ENCODE measurements at regions of chr9 and their contacts with region 1.

Region 1: DNA sequence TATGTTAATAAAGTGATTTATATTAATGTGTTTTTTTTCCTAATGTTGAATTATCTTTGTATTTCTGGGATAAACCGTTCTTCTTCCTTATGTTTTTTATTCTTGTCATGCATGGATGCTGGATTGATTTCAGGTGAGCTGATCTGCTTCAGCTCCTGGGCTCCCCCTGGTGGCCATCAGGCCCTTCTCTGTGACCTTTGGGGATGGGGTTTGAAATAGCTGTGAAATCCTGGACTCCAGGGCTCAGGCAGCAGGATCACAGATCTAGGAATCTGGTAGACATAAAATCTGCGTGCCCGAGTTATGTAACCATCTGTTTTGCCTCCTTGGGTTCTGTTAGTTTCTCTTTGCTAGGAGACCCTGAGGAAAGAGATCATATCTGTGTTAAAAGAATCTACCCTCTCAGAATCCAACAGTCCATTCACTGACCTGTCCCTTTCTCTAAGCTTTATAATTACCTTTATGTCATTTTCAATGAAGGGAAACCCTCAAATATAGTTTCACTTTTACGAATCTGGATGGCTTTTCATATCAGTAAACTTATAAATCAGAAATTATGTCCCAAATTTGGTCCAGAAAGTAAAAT is 12.2 kb upstream of the OR13J1 start:
- DNase-seq: peak; percentile 89
- ATAC-seq: peak; percentile 73
- H3K4me3 Mint-ChIP-seq: no peak overlapping the region
- H3K27ac Mint-ChIP-seq: no peak overlapping the region
- H3K4me1 Mint-ChIP-seq: no peaks in the 10 kb centered on the region
- H3K27me3 Mint-ChIP-seq: peaks cover 10% of the 10 kb centered on the region
- CTCF ChIP-seq: peak; percentile 98

Region 2: GRCh38 chr9:35774907-35775635 is 107.3 kb before region 1 on chr9:
- CTCF ChIA-PET with region 1: interaction called, 17 read pairs
- POLR2A ChIA-PET with region 1: no interaction called
- intact Hi-C with region 1: no loop called
- DNase-seq: no peak
- ATAC-seq: no peak
- H3K4me3 Mint-ChIP-seq: no peak overlapping the region
- H3K27ac Mint-ChIP-seq: no peak overlapping the region
- H3K4me1 Mint-ChIP-seq: peaks cover 6% of the 10 kb centered on the region
- H3K27me3 Mint-ChIP-seq: no peaks in the 10 kb centered on the region
- CTCF ChIP-seq: no peak

Region 3: GRCh38 chr9:35814841-35815543 is 67.4 kb before region 1 on chr9 and contains the start of gene HINT2:
- CTCF ChIA-PET with region 1: interaction called, 18 read pairs
- POLR2A ChIA-PET with region 1: no interaction called
- intact Hi-C with region 1: no loop called
- DNase-seq: peak; percentile 100
- ATAC-seq: peak; percentile 85
- H3K4me3 Mint-ChIP-seq: peak within 1 kb of the TSS; percentile 92
- H3K27ac Mint-ChIP-seq: peak within 1 kb of the TSS; percentile 97
- H3K4me1 Mint-ChIP-seq: peaks cover 34% of the 10 kb centered on the region
- H3K27me3 Mint-ChIP-seq: no peaks in the 10 kb centered on the region
- CTCF ChIP-seq: no peak
- total RNA-seq, gene HINT2: 53.4 to 62.7 TPM

Region 4: DNA sequence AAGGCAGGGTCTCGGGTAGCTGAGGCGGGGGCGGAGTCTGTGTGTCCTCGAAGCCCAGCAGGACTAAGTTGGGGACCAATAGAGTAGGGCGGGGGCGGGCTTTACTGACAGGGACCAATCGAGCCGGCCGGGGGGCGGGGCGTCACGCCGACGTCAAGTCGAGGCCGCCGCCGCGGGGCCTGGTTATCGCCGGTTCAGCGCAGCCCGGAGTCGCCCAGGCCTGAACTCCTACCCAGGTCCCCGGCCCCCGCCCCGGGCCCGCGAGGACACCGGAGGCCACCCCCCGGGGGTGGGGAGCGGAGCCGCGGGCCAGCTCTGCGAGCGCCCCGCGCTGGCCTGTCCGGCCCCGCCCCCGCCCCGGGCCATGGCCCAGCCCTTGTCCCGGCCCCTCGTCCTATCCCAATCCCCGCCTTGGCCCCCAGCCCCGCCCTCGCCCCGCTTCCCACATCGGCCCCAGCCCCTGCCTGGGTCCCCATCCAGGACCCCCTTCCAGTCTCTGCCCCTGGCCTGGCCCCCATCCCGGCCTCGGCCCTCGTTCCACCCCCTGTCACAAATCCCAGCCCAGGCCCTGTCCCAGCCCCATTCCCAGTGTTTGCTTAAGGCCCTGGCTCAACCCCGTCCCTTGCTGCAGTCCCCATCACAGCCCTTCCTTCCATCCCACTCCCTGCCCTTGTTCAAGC is 53.1 kb before region 1 on chr9 and contains the start of gene TMEM8B:
- CTCF ChIA-PET with region 1: interaction called, 54 read pairs
- POLR2A ChIA-PET with region 1: no interaction called
- intact Hi-C with region 1: loop called (anchors 2 kb)
- DNase-seq: peak; percentile 99
- ATAC-seq: peak; percentile 93
- H3K4me3 Mint-ChIP-seq: peak within 1 kb of the TSS; percentile 86
- H3K27ac Mint-ChIP-seq: peak within 1 kb of the TSS; percentile 89
- H3K4me1 Mint-ChIP-seq: peaks cover 24% of the 10 kb centered on the region
- H3K27me3 Mint-ChIP-seq: no peaks in the 10 kb centered on the region
- CTCF ChIP-seq: no peak
- total RNA-seq, gene TMEM8B: 3.4 to 4.3 TPM

Region 5: GRCh38 chr9:35844716-35845270 is 37.6 kb before region 1 on chr9:
- CTCF ChIA-PET with region 1: interaction called, 11 read pairs
- POLR2A ChIA-PET with region 1: no interaction called
- intact Hi-C with region 1: no loop called
- DNase-seq: peak; percentile 37
- ATAC-seq: no peak
- H3K4me3 Mint-ChIP-seq: no peak overlapping the region
- H3K27ac Mint-ChIP-seq: no peak overlapping the region
- H3K4me1 Mint-ChIP-seq: peaks cover 39% of the 10 kb centered on the region
- H3K27me3 Mint-ChIP-seq: no peaks in the 10 kb centered on the region
- CTCF ChIP-seq: no peak

Region 6: GRCh38 chr9:35863583-35863982 is 18.8 kb before region 1 on chr9:
- CTCF ChIA-PET with region 1: interaction called, 22 read pairs
- POLR2A ChIA-PET with region 1: interaction called, 4 read pairs
- intact Hi-C with region 1: no loop called
- DNase-seq: no peak
- ATAC-seq: no peak
- H3K4me3 Mint-ChIP-seq: no peak overlapping the region
- H3K27ac Mint-ChIP-seq: no peak overlapping the region
- H3K4me1 Mint-ChIP-seq: no peaks in the 10 kb centered on the region
- H3K27me3 Mint-ChIP-seq: peaks cover 10% of the 10 kb centered on the region
- CTCF ChIP-seq: no peak

Region 7: GRCh38 chr9:35910613-35911359 is 28.4 kb after region 1 on chr9:
- CTCF ChIA-PET with region 1: interaction called, 11 read pairs
- POLR2A ChIA-PET with region 1: no interaction called
- intact Hi-C with region 1: no loop called
- DNase-seq: peak; percentile 68
- ATAC-seq: peak; percentile 75
- H3K4me3 Mint-ChIP-seq: no peak overlapping the region
- H3K27ac Mint-ChIP-seq: peak overlapping the region; percentile 85
- H3K4me1 Mint-ChIP-seq: peaks cover 47% of the 10 kb centered on the region
- H3K27me3 Mint-ChIP-seq: no peaks in the 10 kb centered on the region
- CTCF ChIP-seq: peak; percentile 38